Thyroid gland (tissue), 4 donors: ENCODE measurements at regions of chr1 and their contacts with region 1.

Region 1: DNA sequence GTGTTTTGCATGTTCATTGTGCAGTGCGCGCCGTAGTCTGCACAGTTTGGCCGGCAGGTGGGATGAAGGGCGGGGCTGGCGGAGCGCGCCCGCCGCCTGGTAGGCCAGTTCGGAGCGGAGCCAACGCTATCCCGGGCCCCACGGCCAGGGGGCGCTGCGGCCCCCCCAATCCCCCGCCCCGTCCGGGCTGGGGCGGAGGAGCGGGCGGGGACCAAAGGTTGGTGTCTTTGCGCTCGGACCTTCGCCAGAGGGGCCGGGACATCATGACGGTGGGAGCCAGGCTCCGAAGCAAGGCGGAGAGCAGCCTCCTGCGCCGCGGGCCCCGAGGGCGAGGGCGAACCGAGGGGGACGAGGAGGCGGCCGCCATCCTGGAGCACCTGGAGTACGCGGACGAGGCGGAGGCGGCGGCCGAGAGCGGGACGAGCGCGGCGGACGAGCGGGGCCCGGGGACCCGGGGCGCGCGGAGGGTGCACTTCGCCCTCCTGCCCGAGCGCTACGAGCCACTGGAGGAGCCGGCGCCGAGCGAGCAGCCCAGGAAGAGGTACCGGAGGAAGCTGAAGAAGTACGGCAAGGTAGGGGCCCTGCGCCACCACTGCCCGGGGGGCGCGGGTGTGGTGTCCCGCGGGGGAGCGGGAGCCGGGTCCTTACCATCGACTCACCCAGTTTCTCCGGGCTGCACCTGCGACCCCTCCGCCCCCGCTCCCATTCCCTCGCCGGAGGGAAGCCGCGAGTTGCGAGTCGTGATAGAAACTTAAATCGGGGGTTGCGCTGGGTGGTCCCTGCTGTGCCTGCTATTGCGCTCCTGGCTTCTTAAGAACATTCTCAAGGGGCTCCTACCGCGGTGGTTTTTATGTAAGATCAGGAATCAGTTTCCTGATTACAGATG is at the start of gene C1orf115:
- DNase-seq: peak; percentile 84 to 87
- H3K4me3 ChIP-seq: peak within 1 kb of the TSS; percentile 67 to 81 (median 68)
- H3K27ac ChIP-seq: peak within 1 kb of the TSS in 2 of 3 donors; percentile 53 to 58
- H3K4me1 ChIP-seq: peaks cover 4 to 9% of the 10 kb centered on the region in 2 donors
- H3K27me3 ChIP-seq: no peaks in the 10 kb centered on the region
- CTCF ChIP-seq: peak; percentile 87 to 99 (median 98)
- POLR2A ChIP-seq: peak; percentile 28 to 91
- total RNA-seq, gene C1orf115: 24.3 to 41.4 (median 31.1) TPM

Region 2: DNA sequence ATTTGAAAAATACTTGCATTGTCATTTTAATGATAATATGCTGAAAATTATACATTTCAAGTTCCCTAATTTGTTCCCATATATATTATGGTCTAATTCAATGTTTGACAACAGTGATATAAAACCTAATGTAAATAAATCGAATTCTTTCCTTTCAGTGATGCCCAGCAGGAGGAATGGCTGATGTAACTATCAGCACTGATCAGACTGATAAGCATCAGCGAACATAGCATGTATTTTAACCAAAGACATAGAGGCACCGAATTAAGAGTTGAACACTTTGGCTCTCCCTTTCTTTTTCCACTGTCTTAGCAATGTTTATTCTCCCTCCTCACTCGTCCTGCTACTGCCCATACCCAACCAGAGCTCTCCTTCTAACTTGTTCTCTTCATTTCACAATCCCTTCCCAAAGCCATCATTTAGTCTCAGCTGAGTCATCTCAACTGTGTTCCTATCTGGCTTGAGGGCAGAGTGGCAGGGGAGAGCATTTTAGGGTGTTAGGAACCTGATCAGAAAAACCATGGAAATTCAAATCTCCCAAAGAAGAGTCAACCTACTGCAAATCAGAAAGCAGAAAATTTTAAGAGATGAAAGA is 59.0 kb before region 1 on chr1:
- intact Hi-C with region 1: no loop called
- DNase-seq: no peak
- H3K4me3 ChIP-seq: no peak overlapping the region
- H3K27ac ChIP-seq: no peak overlapping the region
- H3K4me1 ChIP-seq: no peaks in the 10 kb centered on the region
- H3K27me3 ChIP-seq: no peaks in the 10 kb centered on the region
- CTCF ChIP-seq: no peak
- POLR2A ChIP-seq: no peak

Region 3: GRCh38 chr1:220733090-220733601 is 42.8 kb after region 1 on chr1:
- intact Hi-C with region 1: loop called (anchors 5 kb)
- DNase-seq: peak; percentile 72 to 86
- H3K4me3 ChIP-seq: peak overlapping the region in 1 of 3 donors; percentile 10
- H3K27ac ChIP-seq: peak overlapping the region; percentile 53 to 74 (median 59)
- H3K4me1 ChIP-seq: peaks cover 0 to 24% of the 10 kb centered on the region in 2 donors
- H3K27me3 ChIP-seq: no peaks in the 10 kb centered on the region
- CTCF ChIP-seq: peak; percentile 75 to 94 (median 87)
- POLR2A ChIP-seq: no peak